Activated B cell treated with CpG ODN at 0.5 μM for 24 hours (primary cell): ENCODE measurements at regions of chr7 and their contacts with region 1.

Region 1: DNA sequence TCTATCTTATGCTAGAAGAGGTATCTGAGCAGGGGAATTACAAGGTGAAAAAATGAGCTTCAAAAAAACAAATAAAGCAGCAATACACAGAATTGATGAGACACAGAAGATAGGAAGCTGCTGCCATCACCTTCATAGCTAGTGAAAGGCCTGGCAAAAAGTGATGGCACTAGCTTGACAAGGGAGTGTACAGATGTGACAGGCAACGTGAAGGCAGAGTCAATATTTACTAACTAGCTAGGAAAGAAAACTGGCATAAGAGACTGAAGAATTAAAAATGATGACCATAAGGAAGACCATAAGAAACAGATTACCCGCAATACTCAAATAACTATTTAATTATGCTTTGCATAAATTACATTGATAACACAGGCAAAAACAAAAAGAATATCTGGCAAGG is 9.5 kb downstream of the GPR22 start:
- DNase-seq: no peak
- ATAC-seq: no peak
- H3K4me3 Mint-ChIP-seq: no peak overlapping the region
- H3K27ac Mint-ChIP-seq: no peak overlapping the region
- H3K4me1 Mint-ChIP-seq: peaks cover 2% of the 10 kb centered on the region
- H3K27me3 Mint-ChIP-seq: no peaks in the 10 kb centered on the region
- CTCF ChIP-seq: no peak

Region 2: DNA sequence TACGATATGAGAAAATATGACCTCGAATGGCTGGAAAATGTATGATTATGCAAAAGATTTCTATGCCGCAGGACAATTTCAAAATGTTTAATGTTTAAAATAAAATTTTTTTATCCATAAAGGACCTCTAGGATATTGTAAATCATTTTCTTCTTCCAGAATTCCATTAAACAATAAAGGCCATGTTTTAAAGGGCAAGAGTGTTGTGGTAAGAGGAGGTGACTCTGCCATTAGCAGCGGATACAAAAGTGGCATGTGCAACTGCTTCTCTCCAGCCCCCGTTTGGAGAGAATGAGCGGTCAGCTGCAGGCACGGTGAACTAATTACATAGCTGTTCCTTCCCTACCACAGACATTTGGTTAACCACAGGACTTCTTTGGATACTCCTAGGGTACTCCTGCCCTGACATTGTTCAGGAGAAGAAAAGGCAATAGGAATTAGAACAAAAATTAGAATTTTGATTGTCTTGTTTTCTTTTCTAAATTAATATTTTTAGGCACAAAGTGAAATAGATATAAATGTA is 246.7 kb before region 1 on chr7:
- CTCF ChIA-PET with region 1: no interaction called
- POLR2A ChIA-PET with region 1: no interaction called
- intact Hi-C with region 1: no loop called
- DNase-seq: no peak
- ATAC-seq: no peak
- H3K4me3 Mint-ChIP-seq: no peak overlapping the region
- H3K27ac Mint-ChIP-seq: no peak overlapping the region
- H3K4me1 Mint-ChIP-seq: peaks cover 3% of the 10 kb centered on the region
- H3K27me3 Mint-ChIP-seq: no peaks in the 10 kb centered on the region
- CTCF ChIP-seq: no peak

Region 3: DNA sequence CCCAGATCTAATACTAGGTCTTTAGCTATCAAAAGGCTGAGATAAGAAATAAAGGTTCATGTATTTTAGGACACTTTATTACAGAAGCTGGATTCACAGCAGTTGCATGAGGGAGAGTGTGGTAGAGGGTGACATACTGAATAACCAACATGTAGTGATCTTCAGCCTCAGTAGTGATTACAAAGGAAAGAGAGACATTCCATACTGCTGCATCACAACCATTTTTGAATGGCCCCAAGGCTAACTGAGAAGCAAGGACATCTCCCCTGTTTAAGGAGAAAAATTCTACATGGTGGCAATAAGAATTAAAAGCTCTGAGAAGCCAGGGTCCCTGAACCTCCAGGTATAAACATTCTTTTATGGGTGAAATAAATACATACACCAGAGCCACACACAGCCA is 49.1 kb after region 1 on chr7:
- CTCF ChIA-PET with region 1: no interaction called
- POLR2A ChIA-PET with region 1: no interaction called
- intact Hi-C with region 1: loop called (anchors 5 kb)
- DNase-seq: no peak
- ATAC-seq: no peak
- H3K4me3 Mint-ChIP-seq: no peak overlapping the region
- H3K27ac Mint-ChIP-seq: no peak overlapping the region
- H3K4me1 Mint-ChIP-seq: no peaks in the 10 kb centered on the region
- H3K27me3 Mint-ChIP-seq: no peaks in the 10 kb centered on the region
- CTCF ChIP-seq: no peak